Heart right ventricle (tissue), 16 donors: ENCODE measurements at regions of chr2 and their contacts with region 1.

Region 1: DNA sequence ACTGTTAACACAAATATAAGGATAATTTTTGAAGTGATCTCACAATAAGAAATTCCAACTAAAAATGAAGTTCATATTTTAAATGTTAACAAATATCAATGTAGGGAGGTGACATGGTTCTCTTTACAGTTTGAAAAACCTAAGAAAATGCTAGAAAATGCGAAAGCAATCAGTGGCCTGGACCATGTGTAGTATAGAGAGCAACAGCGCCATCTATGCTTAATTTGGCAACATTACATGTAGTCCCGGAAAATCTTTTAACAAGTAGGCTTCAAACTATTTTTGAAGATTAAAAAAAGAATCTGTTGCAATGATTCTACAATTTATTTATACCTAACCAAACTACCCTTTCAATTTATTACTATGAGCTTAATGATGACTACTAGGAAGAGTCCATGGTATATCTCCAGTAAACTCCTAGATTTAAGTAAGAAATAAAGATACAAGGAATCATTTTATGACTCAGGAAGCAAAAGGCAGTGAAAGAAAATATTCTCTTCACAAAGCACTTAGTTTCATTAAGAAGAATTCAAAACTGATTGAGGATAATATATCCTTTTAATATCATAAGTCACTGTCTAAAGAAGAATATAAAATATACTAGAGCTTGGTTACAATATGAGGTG is 33.3 kb downstream of the NDUFA10 start:
- DNase-seq: no peak
- ATAC-seq: peak in 4 of 8 donors; percentile 25 to 75 (median 56)
- H3K4me3 ChIP-seq: no peak overlapping the region
- H3K27ac ChIP-seq: no peak overlapping the region
- H3K4me1 ChIP-seq: no peaks in the 10 kb centered on the region
- H3K27me3 ChIP-seq: no peaks in the 10 kb centered on the region
- CTCF ChIP-seq: peak; percentile 66 to 91 (median 82)

Region 2: GRCh38 chr2:239049421-239050251 is 942.2 kb before region 1 on chr2:
- intact Hi-C with region 1: loop called in 1 of 10 experiments (anchors 10 kb)
- DNase-seq: no peak
- ATAC-seq: no peak
- H3K4me3 ChIP-seq: no peak overlapping the region
- H3K27ac ChIP-seq: no peak overlapping the region
- H3K4me1 ChIP-seq: peaks cover 0 to 10% (median 0%) of the 10 kb centered on the region in 9 donors
- H3K27me3 ChIP-seq: no peaks in the 10 kb centered on the region
- CTCF ChIP-seq: no peak

Region 3: DNA sequence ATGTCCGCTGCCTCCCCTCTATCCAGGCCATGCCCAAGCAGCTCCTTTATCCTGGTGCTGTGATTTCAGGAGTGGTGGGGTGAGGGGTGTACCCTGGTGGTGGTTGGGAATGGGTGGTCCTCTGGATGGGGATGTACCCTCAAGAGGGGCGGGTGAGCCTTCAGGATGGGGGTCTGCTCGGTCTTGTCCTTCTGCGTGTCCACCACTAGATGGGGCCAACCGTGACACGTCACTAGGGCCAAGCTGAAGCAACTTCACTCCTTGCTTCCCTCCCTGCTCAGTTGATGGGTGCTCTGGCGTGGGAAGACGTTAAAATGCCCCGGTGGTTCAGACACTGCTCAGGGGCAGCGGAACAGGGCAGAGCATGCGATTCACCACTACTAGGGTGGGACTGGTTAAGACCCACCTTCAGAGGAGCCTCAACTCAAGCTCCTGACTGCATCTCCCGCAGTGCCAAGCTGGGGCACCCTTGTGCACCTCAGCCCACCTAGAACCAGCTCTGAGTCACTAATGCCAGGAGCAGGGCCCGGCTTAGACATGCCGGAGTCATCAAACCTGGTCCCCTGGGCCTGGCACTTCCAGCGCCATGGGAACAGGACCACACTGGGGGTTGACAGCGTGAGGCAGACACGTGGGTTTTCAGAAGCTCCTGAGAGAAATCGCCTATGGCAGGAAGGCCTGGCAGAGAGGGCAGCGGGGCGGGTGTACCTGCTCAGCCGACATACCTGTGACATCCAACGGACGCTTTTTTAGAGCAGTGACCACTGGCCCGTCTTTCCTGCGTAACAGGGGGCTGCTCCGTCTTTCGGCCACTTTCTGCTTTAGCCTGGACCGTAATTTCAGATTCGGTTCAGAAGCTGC is 847.7 kb before region 1 on chr2:
- intact Hi-C with region 1: loop called in 1 of 10 experiments (anchors 10 kb)
- DNase-seq: no peak
- ATAC-seq: peak; percentile 19 to 69 (median 53)
- H3K4me3 ChIP-seq: no peak overlapping the region
- H3K27ac ChIP-seq: no peak overlapping the region
- H3K4me1 ChIP-seq: peaks cover 0 to 2% (median 0%) of the 10 kb centered on the region in 9 donors
- H3K27me3 ChIP-seq: no peaks in the 10 kb centered on the region
- CTCF ChIP-seq: peak; percentile 38 to 73 (median 68)